Ovary (tissue), 10 donors: ENCODE measurements at regions of chr4 and their contacts with region 1.

Region 1: GRCh38 chr4:74444891-74445642 is at the start of gene AREG:
- DNase-seq: peak; percentile 41 to 80 (median 68)
- H3K4me3 ChIP-seq: peak within 1 kb of the TSS; percentile 37
- H3K27ac ChIP-seq: peak within 1 kb of the TSS; percentile 18 to 64
- H3K4me1 ChIP-seq: no peaks in the 10 kb centered on the region
- H3K27me3 ChIP-seq: no peaks in the 10 kb centered on the region
- CTCF ChIP-seq: peak in 1 of 3 donors; percentile 23
- EP300 ChIP-seq: no peak
- POLR2A ChIP-seq: no peak
- total RNA-seq, gene AREG: 0.48 to 72.7 (median 6.3) TPM

Region 2: GRCh38 chr4:72689923-72690322 is 1755.1 kb before region 1 on chr4:
- intact Hi-C with region 1: loop called in 1 of 4 experiments (anchors 5 kb)
- DNase-seq: no peak
- H3K4me3 ChIP-seq: no peak overlapping the region
- H3K27ac ChIP-seq: no peak overlapping the region
- H3K4me1 ChIP-seq: no peaks in the 10 kb centered on the region
- H3K27me3 ChIP-seq: no peaks in the 10 kb centered on the region
- CTCF ChIP-seq: no peak
- EP300 ChIP-seq: no peak
- POLR2A ChIP-seq: no peak